Endothelial cell of umbilical vein (primary cell): ENCODE measurements at regions of chr1 and their contacts with region 1.

Region 1: GRCh38 chr1:165914136-165914798 is 86.9 kb downstream of the UCK2 start:
- DNase-seq: peak; percentile 86
- H3K4me3 ChIP-seq: no peak overlapping the region
- H3K27ac ChIP-seq: no peak overlapping the region
- H3K4me1 ChIP-seq: peaks cover 18% of the 10 kb centered on the region
- H3K27me3 ChIP-seq: no peaks in the 10 kb centered on the region
- CTCF ChIP-seq: peak; percentile 81 to 82
- POLR2A ChIP-seq: no peak

Region 2: DNA sequence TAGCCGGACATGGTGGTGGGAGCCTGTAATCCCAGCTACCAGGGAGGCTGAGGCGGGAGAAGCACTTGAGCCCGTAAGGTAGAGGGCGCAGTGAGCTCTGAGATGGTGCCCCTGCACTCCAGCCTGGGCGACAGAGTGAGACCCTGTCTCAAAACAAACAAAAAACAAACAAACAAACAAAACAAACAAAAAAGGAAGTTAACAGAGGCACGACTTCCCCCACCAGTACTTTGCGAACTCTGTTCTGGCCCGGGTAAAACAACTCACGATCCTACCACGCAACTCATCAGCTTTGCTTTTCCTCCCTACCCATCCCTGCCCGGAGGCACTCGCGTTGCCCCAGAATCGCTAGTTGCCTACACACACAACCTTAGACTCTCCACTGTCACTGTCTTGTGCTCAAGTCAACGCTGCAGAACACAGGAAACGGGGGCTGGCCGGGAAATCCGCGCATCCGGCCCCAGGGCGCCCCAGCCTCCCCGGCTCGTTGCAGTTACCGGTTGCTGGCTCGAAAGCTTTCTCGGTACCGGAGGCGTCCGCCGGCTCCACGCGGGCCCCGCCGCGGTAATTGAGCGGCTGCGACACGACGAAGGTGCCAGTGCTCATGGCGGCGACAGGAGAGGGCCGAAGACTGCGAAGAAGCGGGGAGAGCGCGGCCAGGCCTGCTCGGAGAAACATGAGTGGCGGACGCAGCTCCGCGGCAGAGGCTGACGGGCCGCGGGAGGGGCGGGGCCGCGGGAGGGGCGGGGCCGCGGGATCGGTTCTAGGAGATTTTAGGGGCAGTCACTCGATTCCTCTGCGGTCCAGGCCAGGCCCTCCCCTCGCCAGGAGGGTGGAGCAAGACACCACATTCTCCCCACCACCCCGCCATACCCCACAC is 216.1 kb before region 1 on chr1 and contains the start of gene ALDH9A1:
- CTCF ChIA-PET with region 1: interaction called, 3 read pairs
- POLR2A ChIA-PET with region 1: no interaction called
- dilution Hi-C with region 1: no loop called
- intact Hi-C with region 1: loop called (anchors 5 kb)
- DNase-seq: peak; percentile 84
- H3K4me3 ChIP-seq: peak within 1 kb of the TSS; percentile 36 to 75 (median 55)
- H3K27ac ChIP-seq: peak within 1 kb of the TSS; percentile 72
- H3K4me1 ChIP-seq: peaks cover 21% of the 10 kb centered on the region
- H3K27me3 ChIP-seq: peaks cover 2 to 3% of the 10 kb centered on the region in 2 experiments
- CTCF ChIP-seq: peak in 1 of 2 donors; percentile 30
- POLR2A ChIP-seq: peak; percentile 82
- total RNA-seq, gene ALDH9A1: 41.4 and 47.4 TPM in 2 replicates

Region 3: DNA sequence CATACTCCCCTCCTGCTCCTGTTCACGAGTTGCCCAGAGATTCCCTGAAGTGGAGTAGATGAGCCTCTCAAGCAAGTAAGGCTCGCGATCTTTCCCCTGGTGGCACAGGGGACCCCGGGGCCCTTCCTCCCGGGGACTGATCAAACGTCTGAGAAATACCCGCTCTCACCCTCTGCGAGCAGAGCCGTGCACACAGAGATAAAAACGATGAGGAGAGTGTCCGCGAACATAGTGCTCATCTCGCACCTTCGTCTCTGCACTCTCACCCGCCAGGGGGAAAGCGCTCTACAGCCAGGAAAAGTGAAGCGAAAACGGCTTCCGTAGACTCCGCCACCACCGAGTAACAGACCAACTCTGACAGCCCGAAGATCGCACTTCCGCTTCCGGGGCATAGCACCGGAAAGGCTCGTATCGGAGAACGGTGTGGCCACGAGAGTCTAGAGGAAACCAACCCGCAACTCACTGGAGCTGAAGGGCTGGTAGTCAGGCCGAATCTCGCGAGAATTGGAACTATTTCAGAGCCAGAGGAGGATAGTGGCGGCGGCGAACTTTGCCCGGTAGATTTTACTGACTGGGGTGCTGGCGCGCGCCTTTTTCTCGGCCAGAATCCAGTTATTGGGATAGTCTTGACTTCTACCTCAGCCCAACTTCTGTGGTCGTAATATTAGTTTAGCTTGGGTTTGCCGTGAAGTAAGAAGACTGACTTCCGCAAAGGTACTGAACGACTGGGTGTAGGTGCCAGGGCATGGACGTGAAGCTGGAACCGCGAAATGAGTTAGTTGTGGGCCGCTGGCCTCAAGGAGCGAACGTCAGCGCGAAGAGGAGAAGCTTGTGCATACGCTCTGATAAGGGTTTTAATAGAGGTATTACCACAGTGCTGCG is 145.5 kb before region 1 on chr1 and contains the start of gene TMCO1:
- CTCF ChIA-PET with region 1: interaction called, 3 read pairs
- POLR2A ChIA-PET with region 1: no interaction called
- dilution Hi-C with region 1: no loop called
- intact Hi-C with region 1: loop called (anchors 1 kb)
- DNase-seq: peak; percentile 97
- H3K4me3 ChIP-seq: peak within 1 kb of the TSS; percentile 37 to 92 (median 75)
- H3K27ac ChIP-seq: peak within 1 kb of the TSS; percentile 68
- H3K4me1 ChIP-seq: peaks cover 18% of the 10 kb centered on the region
- H3K27me3 ChIP-seq: no peaks in the 10 kb centered on the region
- CTCF ChIP-seq: peak in 1 of 2 donors; percentile 20
- POLR2A ChIP-seq: peak; percentile 93
- total RNA-seq, gene TMCO1: 80.0 and 86.0 TPM in 2 replicates

Region 4: GRCh38 chr1:165871311-165872067 is 42.8 kb before region 1 on chr1:
- CTCF ChIA-PET with region 1: interaction called, 5 read pairs
- POLR2A ChIA-PET with region 1: no interaction called
- dilution Hi-C with region 1: no loop called
- intact Hi-C with region 1: loop called (anchors 1 kb)
- DNase-seq: peak; percentile 54
- H3K4me3 ChIP-seq: no peak overlapping the region
- H3K27ac ChIP-seq: peak overlapping the region; percentile 21
- H3K4me1 ChIP-seq: peaks cover 10% of the 10 kb centered on the region
- H3K27me3 ChIP-seq: no peaks in the 10 kb centered on the region
- CTCF ChIP-seq: peak; percentile 44 to 45
- POLR2A ChIP-seq: no peak

Region 5: GRCh38 chr1:165928075-165928731 is 13.9 kb after region 1 on chr1:
- CTCF ChIA-PET with region 1: interaction called, 15 read pairs
- POLR2A ChIA-PET with region 1: no interaction called
- dilution Hi-C with region 1: no loop called
- intact Hi-C with region 1: no loop called
- DNase-seq: peak; percentile 43
- H3K4me3 ChIP-seq: no peak overlapping the region
- H3K27ac ChIP-seq: no peak overlapping the region
- H3K4me1 ChIP-seq: no peaks in the 10 kb centered on the region
- H3K27me3 ChIP-seq: no peaks in the 10 kb centered on the region
- CTCF ChIP-seq: peak; percentile 71 to 73
- POLR2A ChIP-seq: no peak

Region 6: DNA sequence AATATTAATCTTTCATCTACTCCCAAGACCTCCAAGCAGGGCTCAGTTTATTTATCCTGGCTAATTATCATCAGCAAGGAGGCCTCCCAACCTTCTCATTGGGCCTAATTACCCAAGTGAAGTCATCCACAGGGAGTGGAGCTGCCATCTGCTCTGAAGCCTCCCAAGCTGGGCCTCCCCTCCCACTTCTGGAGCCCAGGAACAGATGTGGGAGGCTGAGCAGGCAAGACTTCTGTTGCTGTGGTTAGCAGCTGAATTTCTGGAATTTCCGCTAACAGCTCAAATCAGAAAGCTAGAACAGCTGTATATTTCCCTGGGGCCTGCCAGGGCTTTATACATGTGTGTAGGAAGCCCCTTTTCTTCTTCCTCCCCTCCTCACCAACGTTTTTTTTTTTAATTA is 40.7 kb after region 1 on chr1:
- CTCF ChIA-PET with region 1: no interaction called
- POLR2A ChIA-PET with region 1: no interaction called
- dilution Hi-C with region 1: no loop called
- intact Hi-C with region 1: no loop called
- DNase-seq: no peak
- H3K4me3 ChIP-seq: no peak overlapping the region
- H3K27ac ChIP-seq: no peak overlapping the region
- H3K4me1 ChIP-seq: no peaks in the 10 kb centered on the region
- H3K27me3 ChIP-seq: no peaks in the 10 kb centered on the region
- CTCF ChIP-seq: no peak
- POLR2A ChIP-seq: no peak